ENCODE measurements at regions of chr3 and their contacts with region 1.

Region 1: GRCh38 chr3:158918008-158918407 is 116.2 kb downstream of the MFSD1 start:
- DNase-seq: peak; percentile 61
- H3K4me3 ChIP-seq: no peak overlapping the region
- H3K27ac ChIP-seq: no peak overlapping the region
- H3K4me1 ChIP-seq: no peaks in the 10 kb centered on the region
- H3K27me3 ChIP-seq: no peaks in the 10 kb centered on the region
- CTCF ChIP-seq: peak; percentile 82 to 84

Region 2: GRCh38 chr3:158683216-158683962 is 234.6 kb before region 1 on chr3:
- CTCF ChIA-PET with region 1: no interaction called
- dilution Hi-C with region 1: no loop called
- in situ Hi-C with region 1: no loop called
- intact Hi-C with region 1: no loop called
- DNase-seq: peak; percentile 28
- H3K4me3 ChIP-seq: no peak overlapping the region
- H3K27ac ChIP-seq: no peak overlapping the region
- H3K4me1 ChIP-seq: no peaks in the 10 kb centered on the region
- H3K27me3 ChIP-seq: no peaks in the 10 kb centered on the region
- CTCF ChIP-seq: no peak

Region 3: GRCh38 chr3:158845765-158846350 is 72.2 kb before region 1 on chr3:
- CTCF ChIA-PET with region 1: no interaction called
- dilution Hi-C with region 1: no loop called
- in situ Hi-C with region 1: no loop called
- intact Hi-C with region 1: loop called (anchors 1 kb)
- DNase-seq: no peak
- H3K4me3 ChIP-seq: no peak overlapping the region
- H3K27ac ChIP-seq: no peak overlapping the region
- H3K4me1 ChIP-seq: no peaks in the 10 kb centered on the region
- H3K27me3 ChIP-seq: peaks cover 2% of the 10 kb centered on the region
- CTCF ChIP-seq: peak; percentile 52 to 69

Region 4: GRCh38 chr3:158882445-158882844 is 35.6 kb before region 1 on chr3:
- CTCF ChIA-PET with region 1: no interaction called
- dilution Hi-C with region 1: no loop called
- in situ Hi-C with region 1: no loop called
- intact Hi-C with region 1: no loop called
- DNase-seq: no peak
- H3K4me3 ChIP-seq: no peak overlapping the region
- H3K27ac ChIP-seq: no peak overlapping the region
- H3K4me1 ChIP-seq: no peaks in the 10 kb centered on the region
- H3K27me3 ChIP-seq: peaks cover 3% of the 10 kb centered on the region
- CTCF ChIP-seq: no peak

Region 5: GRCh38 chr3:159114582-159114981 is 196.6 kb after region 1 on chr3:
- CTCF ChIA-PET with region 1: no interaction called
- dilution Hi-C with region 1: no loop called
- in situ Hi-C with region 1: no loop called
- intact Hi-C with region 1: loop called (anchors 5 kb)
- DNase-seq: no peak
- H3K4me3 ChIP-seq: no peak overlapping the region
- H3K27ac ChIP-seq: no peak overlapping the region
- H3K4me1 ChIP-seq: no peaks in the 10 kb centered on the region
- H3K27me3 ChIP-seq: peaks cover 9% of the 10 kb centered on the region
- CTCF ChIP-seq: no peak

Region 6: GRCh38 chr3:159244933-159245332 is 326.9 kb after region 1 on chr3:
- CTCF ChIA-PET with region 1: no interaction called
- dilution Hi-C with region 1: loop called (anchors 25 kb)
- in situ Hi-C with region 1: loop called in 1 of 2 experiments (anchors 5 kb)
- intact Hi-C with region 1: no loop called
- DNase-seq: no peak
- H3K4me3 ChIP-seq: no peak overlapping the region
- H3K27ac ChIP-seq: no peak overlapping the region
- H3K4me1 ChIP-seq: no peaks in the 10 kb centered on the region
- H3K27me3 ChIP-seq: no peaks in the 10 kb centered on the region
- CTCF ChIP-seq: no peak

Measured in mammary epithelial cell (primary cell).